Activated B cell treated with CpG ODN at 0.5 μM for 24 hours (primary cell): ENCODE measurements at regions of chr10 and their contacts with region 1.

Region 1: DNA sequence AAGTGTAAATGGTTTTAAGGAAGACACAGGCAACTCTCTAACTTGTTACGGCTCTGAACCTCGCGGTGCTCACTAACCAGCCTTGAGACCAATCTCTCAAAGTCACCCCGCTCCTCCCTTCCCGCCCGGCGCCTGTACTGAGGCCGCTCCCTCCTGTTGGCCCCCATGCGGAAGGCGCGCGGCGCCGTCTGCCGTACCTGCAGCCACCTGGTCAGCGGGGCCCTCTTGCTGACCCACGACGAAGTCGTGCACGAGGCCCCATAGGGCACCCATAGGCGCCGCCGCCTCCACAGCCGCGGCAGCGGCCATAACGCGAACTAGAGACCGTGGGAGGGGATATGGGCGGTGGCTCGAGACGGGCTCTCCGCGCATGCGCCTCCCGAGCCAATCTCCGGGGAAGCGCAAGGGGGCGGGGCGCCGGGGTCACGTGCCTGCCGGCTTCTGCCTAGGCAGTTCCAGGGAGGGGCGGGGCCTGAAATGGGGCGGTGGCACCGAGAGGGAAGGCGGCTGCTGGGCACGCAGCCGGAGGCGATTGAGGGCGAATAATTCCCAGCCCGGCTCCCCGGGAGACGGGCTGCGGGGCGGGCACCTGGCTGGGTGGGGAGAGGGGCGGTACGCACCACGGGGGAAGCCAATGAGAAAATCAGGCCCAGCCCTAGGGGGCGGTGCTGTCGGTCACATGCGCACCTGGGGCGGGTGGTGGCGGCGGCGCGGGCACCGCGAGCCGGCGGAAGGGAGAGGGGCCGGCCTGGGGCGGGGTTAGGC is at the start of gene MMS19:
- DNase-seq: peak; percentile 100
- ATAC-seq: peak; percentile 87
- H3K4me3 Mint-ChIP-seq: peak within 1 kb of the TSS; percentile 96
- H3K27ac Mint-ChIP-seq: peak within 1 kb of the TSS; percentile 96
- H3K4me1 Mint-ChIP-seq: peaks cover 35% of the 10 kb centered on the region
- H3K27me3 Mint-ChIP-seq: peaks cover 30% of the 10 kb centered on the region
- CTCF ChIP-seq: no peak
- total RNA-seq, gene MMS19: 83.0 and 89.2 TPM in 2 replicates

Region 2: GRCh38 chr10:96586419-96587263 is 911.6 kb before region 1 on chr10 and contains the start of gene TM9SF3:
- CTCF ChIA-PET with region 1: no interaction called
- POLR2A ChIA-PET with region 1: no interaction called
- intact Hi-C with region 1: loop called (anchors 2 kb)
- DNase-seq: peak; percentile 84
- ATAC-seq: peak; percentile 82
- H3K4me3 Mint-ChIP-seq: peak within 1 kb of the TSS; percentile 87
- H3K27ac Mint-ChIP-seq: peak within 1 kb of the TSS; percentile 71
- H3K4me1 Mint-ChIP-seq: peaks cover 36% of the 10 kb centered on the region
- H3K27me3 Mint-ChIP-seq: no peaks in the 10 kb centered on the region
- CTCF ChIP-seq: no peak
- total RNA-seq, gene TM9SF3: 61.7 and 62.7 TPM in 2 replicates

Region 3: GRCh38 chr10:97400665-97401454 is 97.4 kb before region 1 on chr10 and contains the start of gene RRP12:
- CTCF ChIA-PET with region 1: no interaction called
- POLR2A ChIA-PET with region 1: interaction called, 3 read pairs
- intact Hi-C with region 1: loop called (anchors 1 kb)
- DNase-seq: peak; percentile 66
- ATAC-seq: peak; percentile 89
- H3K4me3 Mint-ChIP-seq: peak within 1 kb of the TSS; percentile 91
- H3K27ac Mint-ChIP-seq: peak within 1 kb of the TSS; percentile 92
- H3K4me1 Mint-ChIP-seq: peaks cover 18% of the 10 kb centered on the region
- H3K27me3 Mint-ChIP-seq: no peaks in the 10 kb centered on the region
- CTCF ChIP-seq: no peak
- total RNA-seq, gene RRP12: 61.8 and 62.6 TPM in 2 replicates

Region 4: DNA sequence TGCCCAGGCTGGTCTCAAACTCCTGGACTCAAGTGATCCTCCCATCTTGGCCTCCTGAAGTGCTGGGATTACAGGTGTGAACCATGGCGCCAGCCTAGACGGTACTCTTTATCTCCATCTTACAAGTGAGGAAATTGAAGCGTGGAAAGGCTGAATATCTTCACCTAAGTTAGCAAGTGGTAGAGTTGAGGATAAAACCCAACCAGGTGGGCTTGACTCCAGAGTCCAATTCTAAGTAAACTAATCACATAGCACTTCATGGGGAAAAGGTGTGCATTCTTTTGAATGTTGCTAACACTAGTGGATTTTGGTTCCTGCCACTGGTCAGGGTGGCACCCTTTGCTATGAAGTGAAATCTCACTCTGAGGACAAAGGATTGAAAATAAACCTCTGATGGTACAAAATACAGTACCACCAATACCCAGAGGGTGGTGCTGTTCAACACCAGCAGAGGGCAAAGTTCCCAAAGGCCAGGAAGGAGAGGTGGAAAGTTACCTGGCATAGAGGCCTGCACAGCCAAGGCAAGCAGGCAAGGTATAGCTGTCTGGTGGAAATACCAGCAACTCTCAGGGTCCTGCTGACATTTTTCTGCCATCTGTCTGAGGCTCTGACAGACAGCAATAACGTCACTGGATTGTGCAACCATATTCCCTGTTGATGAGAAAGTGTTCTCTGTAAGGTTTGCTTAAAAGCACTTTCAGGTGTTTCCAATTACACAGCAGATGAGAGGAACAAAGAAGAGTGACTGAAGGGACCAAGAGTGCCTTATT is 34.7 kb before region 1 on chr10:
- CTCF ChIA-PET with region 1: no interaction called
- POLR2A ChIA-PET with region 1: no interaction called
- intact Hi-C with region 1: loop called (anchors 5 kb)
- DNase-seq: no peak
- ATAC-seq: peak; percentile 76
- H3K4me3 Mint-ChIP-seq: no peak overlapping the region
- H3K27ac Mint-ChIP-seq: no peak overlapping the region
- H3K4me1 Mint-ChIP-seq: no peaks in the 10 kb centered on the region
- H3K27me3 Mint-ChIP-seq: no peaks in the 10 kb centered on the region
- CTCF ChIP-seq: no peak

Region 5: DNA sequence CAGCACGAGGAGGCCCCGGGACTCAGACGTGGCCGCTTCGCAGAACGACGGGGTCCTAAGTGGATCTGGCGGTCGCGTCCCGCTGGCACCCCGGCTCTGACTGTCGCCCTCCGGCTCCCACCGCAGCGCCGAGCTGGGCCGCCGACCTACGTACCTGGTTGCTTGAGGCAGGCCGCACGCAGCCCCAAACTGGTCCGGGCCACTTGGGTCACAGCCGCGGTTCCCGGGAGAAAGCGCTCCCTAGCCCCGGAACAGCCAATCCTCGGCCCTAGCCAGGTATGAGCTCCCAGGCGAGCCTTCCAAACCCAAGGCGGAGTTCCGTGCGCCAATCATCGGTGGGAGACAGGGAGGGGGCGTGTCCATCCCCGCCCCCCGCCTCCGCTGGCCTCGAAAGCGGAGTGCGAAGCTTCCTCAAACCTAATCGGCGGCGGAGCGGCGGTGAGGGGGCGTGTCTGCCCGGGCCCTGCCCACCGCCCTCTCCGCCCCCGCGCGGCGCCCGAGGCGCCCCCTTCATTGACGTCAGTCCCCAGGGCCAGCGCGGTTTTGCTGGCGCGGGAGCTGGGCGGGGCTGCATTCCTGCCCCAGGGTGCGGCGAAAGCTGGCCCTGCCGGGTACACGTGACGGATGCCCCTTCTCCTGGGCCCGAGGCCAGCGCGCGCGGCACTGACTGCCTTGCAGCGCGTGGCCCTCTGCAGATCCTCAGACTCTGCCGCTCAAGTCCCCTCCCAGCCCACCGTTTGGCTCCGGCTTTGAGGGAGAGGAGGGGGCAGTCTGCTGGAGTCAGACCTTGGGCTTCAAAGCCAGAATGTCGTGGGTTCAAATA is 188.9 kb after region 1 on chr10 and contains the start of gene AVPI1:
- CTCF ChIA-PET with region 1: no interaction called
- POLR2A ChIA-PET with region 1: no interaction called
- intact Hi-C with region 1: loop called (anchors 1 kb)
- DNase-seq: peak; percentile 97
- ATAC-seq: peak; percentile 96
- H3K4me3 Mint-ChIP-seq: peak within 1 kb of the TSS; percentile 87
- H3K27ac Mint-ChIP-seq: peak within 1 kb of the TSS; percentile 68
- H3K4me1 Mint-ChIP-seq: peaks cover 9% of the 10 kb centered on the region
- H3K27me3 Mint-ChIP-seq: no peaks in the 10 kb centered on the region
- CTCF ChIP-seq: no peak
- total RNA-seq, gene AVPI1: 0.51 and 1.2 TPM in 2 replicates